ENCODE measurements at regions of chr10 and their contacts with region 1.

Region 1: GRCh38 chr10:119608316-119609155 is 11.8 kb upstream of the TIAL1 start:
- DNase-seq: peak; percentile 39 to 40
- ATAC-seq: peak; percentile 58 to 94 (median 86)
- H3K4me3 ChIP-seq: peak overlapping the region in 1 of 10 donors; percentile 19
- H3K27ac ChIP-seq: no peak overlapping the region
- H3K4me1 ChIP-seq: peaks cover 0 to 3% (median 0%) of the 10 kb centered on the region in 9 donors
- H3K27me3 ChIP-seq: peaks cover 0 to 6% (median 0%) of the 10 kb centered on the region in 7 donors
- CTCF ChIP-seq: peak; percentile 37 to 84 (median 68)

Region 2: DNA sequence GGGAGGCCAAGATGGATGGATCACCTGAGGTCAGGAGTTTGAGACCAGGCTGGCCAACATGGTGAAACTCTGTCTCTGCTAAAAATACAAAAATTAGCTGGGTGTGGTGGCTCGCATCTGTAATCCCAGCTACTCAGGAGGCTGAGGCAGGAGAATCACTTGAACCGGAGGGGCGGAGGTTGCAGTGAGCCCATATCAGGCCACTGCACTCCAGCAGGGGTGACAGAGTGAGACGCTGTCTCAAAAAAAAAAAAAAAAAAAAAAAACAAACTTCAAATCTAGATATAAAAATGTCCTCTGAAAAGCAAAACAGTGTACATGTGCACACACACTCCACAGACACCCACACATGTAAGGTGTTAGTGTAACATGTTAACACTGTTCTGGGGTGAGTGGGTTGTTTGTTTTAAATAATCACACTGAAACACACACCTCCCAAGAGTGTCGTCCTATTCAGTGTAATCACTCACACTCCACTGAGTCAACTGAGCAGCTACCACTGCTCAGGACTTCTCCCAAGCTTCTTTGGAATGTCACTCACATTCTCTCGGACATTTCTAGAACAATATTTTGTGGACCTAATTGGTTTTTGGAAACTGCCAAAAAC is 53.3 kb before region 1 on chr10:
- intact Hi-C with region 1: no loop called
- DNase-seq: no peak
- ATAC-seq: no peak
- H3K4me3 ChIP-seq: no peak overlapping the region
- H3K27ac ChIP-seq: no peak overlapping the region
- H3K4me1 ChIP-seq: no peaks in the 10 kb centered on the region
- H3K27me3 ChIP-seq: no peaks in the 10 kb centered on the region
- CTCF ChIP-seq: no peak

Region 3: DNA sequence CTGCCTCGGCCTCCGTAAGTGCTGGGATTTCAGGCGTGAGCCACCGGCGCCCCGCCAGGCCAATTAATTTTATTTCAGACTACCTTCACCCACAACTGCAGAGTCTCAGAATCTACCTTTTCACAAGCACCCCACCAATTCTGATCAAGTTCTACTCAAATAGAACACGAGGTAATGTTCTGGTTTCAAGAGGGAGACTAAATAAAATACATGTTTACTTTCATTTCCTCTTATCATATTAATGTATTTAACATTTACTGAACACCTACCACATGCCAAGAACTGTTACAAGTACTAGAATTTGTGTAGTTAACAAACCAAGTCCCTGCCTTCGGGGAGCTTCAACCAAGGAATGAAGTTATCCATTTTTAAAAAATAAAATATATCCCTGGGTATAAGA is 40.6 kb before region 1 on chr10:
- intact Hi-C with region 1: loop called in 1 of 10 experiments (anchors 1 kb)
- DNase-seq: no peak
- ATAC-seq: no peak
- H3K4me3 ChIP-seq: no peak overlapping the region
- H3K27ac ChIP-seq: no peak overlapping the region
- H3K4me1 ChIP-seq: peaks cover 0 to 7% (median 0%) of the 10 kb centered on the region in 9 donors
- H3K27me3 ChIP-seq: no peaks in the 10 kb centered on the region
- CTCF ChIP-seq: no peak

Region 4: GRCh38 chr10:119644994-119645393 is 36.5 kb after region 1 on chr10:
- intact Hi-C with region 1: loop called in 4 of 10 experiments (anchors 5 kb)
- DNase-seq: no peak
- ATAC-seq: no peak
- H3K4me3 ChIP-seq: no peak overlapping the region
- H3K27ac ChIP-seq: no peak overlapping the region
- H3K4me1 ChIP-seq: no peaks in the 10 kb centered on the region
- H3K27me3 ChIP-seq: no peaks in the 10 kb centered on the region
- CTCF ChIP-seq: no peak

Region 5: GRCh38 chr10:119650692-119651513 is 42.4 kb after region 1 on chr10 and contains the start of gene BAG3:
- intact Hi-C with region 1: loop called in 5 of 10 experiments (anchors 1 to 5 kb)
- DNase-seq: peak; percentile 94 to 95
- ATAC-seq: peak; percentile 89 to 95 (median 92)
- H3K4me3 ChIP-seq: peak within 1 kb of the TSS; percentile 59 to 96 (median 86)
- H3K27ac ChIP-seq: peak within 1 kb of the TSS; percentile 92 to 100 (median 98)
- H3K4me1 ChIP-seq: peaks cover 20 to 41% (median 34%) of the 10 kb centered on the region in 9 donors
- H3K27me3 ChIP-seq: peaks cover 0 to 3% (median 0%) of the 10 kb centered on the region in 7 donors
- CTCF ChIP-seq: no peak
- total RNA-seq, gene BAG3: 115 to 191 (median 145) TPM

Region 6: GRCh38 chr10:119725828-119726675 is 117.5 kb after region 1 on chr10 and contains the start of gene INPP5F:
- intact Hi-C with region 1: loop called in 2 of 10 experiments (anchors 5 to 10 kb)
- DNase-seq: peak; percentile 99 to 100
- ATAC-seq: peak; percentile 98 to 100 (median 99)
- H3K4me3 ChIP-seq: peak within 1 kb of the TSS; percentile 44 to 95 (median 82)
- H3K27ac ChIP-seq: peak within 1 kb of the TSS; percentile 66 to 98 (median 96)
- H3K4me1 ChIP-seq: peaks cover 3 to 37% (median 28%) of the 10 kb centered on the region in 9 donors
- H3K27me3 ChIP-seq: no peaks in the 10 kb centered on the region
- CTCF ChIP-seq: peak in 8 of 9 donors; percentile 25 to 65 (median 41)
- total RNA-seq, gene INPP5F: 4.2 to 13.3 (median 7.5) TPM

Region 7: DNA sequence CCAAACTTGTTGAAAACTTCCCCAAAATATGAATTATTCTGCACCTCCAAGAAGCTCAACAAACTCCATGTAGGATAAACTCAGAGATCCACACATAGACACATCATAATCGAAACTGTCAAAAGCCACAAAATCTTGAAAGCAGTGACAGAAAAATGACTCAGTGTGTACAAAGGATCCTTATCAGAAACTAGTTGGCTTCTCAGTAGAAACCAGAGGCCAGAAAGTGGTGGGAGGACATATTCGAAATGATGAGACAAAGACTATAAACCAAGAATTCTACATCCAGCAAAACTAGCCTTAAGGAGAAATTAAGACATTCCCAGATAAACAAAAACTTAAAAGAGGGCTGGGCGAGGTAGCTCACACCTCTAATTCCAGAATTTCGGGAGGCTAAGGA is 225.7 kb after region 1 on chr10:
- intact Hi-C with region 1: loop called in 1 of 10 experiments (anchors 10 kb)
- DNase-seq: no peak
- ATAC-seq: no peak
- H3K4me3 ChIP-seq: no peak overlapping the region
- H3K27ac ChIP-seq: no peak overlapping the region
- H3K4me1 ChIP-seq: no peaks in the 10 kb centered on the region
- H3K27me3 ChIP-seq: no peaks in the 10 kb centered on the region
- CTCF ChIP-seq: no peak

Region 8: GRCh38 chr10:119859420-119860258 is 251.1 kb after region 1 on chr10:
- intact Hi-C with region 1: loop called in 7 of 10 experiments (anchors 1 to 10 kb)
- DNase-seq: no peak
- ATAC-seq: no peak
- H3K4me3 ChIP-seq: no peak overlapping the region
- H3K27ac ChIP-seq: no peak overlapping the region
- H3K4me1 ChIP-seq: peaks cover 0 to 14% (median 11%) of the 10 kb centered on the region in 9 donors
- H3K27me3 ChIP-seq: no peaks in the 10 kb centered on the region
- CTCF ChIP-seq: peak; percentile 38 to 75 (median 68)

Measured in heart right ventricle (tissue), 16 donors.